Activated naive CD4-positive, alpha-beta T cell treated with anti-CD3 and anti-CD28 coated beads for 36 hours (primary cell): ENCODE measurements at regions of chr6 and their contacts with region 1.

Region 1: DNA sequence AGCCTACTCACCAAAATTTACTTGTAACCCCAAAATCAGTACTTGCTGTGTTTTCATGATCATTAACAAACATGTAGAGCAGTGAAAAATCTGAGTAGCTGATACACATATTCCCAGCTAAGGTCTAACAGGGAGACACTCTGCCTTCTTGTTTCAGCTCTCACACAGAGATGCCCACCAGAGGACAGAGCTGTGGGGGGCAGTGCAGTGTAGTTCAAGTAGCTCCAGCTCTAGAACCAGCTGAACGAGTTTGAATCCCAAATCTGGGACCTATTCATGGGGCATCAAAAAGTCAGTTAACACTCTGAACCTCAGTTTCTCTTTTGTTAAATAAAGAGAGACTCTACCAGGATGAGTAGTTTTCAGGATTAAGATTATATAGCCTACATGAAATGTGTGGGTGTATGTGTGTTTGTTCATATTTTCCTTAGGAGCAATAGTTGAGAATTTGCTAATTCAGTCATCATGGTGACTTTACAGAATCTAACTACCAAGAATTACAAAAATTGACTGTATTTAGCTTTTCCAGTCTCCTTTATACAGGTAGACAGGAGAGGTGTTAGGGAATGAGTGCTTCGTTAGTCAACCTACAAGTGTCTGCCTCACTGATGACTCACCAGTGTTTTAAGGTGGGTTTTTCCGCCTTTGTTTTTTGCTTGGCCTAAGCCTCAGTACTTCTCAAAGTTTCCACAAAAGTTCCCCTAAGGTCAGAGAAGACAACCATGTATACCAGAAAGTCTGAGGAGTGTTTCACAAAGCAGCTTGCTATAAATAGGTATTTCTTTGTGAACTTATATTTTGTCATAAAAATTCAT is 164.0 kb upstream of the RUNX2 start:
- DNase-seq: peak; percentile 72
- H3K4me3 Mint-ChIP-seq: peak overlapping the region; percentile 17
- H3K27ac Mint-ChIP-seq: peak overlapping the region; percentile 93
- H3K4me1 Mint-ChIP-seq: peaks cover 63% of the 10 kb centered on the region
- H3K27me3 Mint-ChIP-seq: no peaks in the 10 kb centered on the region

Region 2: DNA sequence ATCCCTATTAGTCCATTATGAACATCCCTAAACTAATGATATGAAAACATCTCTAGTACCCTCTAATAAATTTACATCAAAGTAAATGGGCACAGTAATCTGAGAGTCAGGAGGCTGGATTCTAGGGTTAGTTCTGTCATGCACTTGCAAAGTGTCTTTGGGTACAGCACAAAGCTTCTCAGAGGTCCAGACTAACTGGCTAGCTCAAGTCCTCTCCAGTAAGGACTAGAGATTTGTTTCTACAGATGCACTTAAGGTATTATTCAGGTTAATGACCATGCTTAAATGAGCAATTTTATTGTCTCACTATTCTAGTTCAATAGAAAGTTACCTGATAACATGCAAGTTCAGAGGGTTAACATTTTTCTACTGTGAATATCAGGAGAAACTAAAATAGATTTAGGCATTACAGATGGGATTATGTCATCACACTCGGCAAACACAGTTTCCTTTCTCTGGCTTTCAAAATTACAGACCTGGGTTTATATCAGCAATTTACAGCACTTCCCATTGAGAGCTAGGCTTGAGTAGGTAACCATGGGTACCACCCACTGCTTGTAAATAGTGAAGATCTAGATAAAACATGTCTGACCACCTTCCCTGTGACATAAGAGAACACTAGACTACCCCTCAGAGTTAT is 238.9 kb before region 1 on chr6:
- CTCF ChIA-PET with region 1: no interaction called
- intact Hi-C with region 1: loop called (anchors 1 kb)
- DNase-seq: peak; percentile 36
- H3K4me3 Mint-ChIP-seq: peak overlapping the region; percentile 0
- H3K27ac Mint-ChIP-seq: peak overlapping the region; percentile 16
- H3K4me1 Mint-ChIP-seq: peaks cover 53% of the 10 kb centered on the region
- H3K27me3 Mint-ChIP-seq: no peaks in the 10 kb centered on the region

Region 3: DNA sequence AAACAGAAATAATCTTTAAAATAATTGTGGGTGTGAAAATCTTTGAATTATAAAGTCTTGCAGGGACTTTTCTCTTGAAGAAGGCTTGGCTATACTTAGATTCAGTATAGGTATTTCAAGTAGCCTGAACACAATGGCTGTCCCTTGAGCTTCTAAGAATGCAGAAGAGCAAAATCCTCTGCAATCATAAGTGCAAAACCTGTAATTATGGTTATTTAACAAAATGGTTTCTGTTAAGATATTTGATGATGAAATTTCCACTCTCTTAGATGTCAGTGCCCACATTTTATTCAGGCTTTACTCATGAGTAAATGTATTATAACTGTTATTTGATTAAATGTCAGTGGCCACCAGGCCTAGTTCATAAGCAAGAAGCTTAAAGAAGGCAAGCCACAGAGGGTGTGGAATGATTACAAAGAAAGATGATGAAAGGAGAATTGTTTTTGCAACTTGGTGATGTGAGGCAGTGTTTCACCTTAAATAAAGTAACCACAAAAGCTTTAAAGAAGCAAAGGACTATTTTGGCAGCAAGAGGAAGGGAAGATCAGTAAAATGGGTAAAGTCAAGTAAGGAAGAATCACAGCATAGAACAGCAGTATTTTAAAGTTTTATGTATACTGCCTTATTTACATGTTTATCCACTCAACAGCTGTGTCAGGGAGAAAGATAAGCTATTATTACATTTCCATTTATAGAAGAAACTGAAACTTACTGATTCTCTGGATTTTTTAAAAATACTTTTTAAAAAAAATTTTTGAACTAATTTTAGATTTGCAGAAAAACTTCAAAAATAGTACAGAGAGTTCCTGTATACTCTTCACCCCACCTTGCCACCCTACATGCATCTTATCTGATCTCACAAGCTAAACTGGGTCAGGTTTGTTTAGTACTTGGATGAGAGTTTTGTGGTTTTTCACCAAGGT is 187.2 kb before region 1 on chr6:
- CTCF ChIA-PET with region 1: no interaction called
- intact Hi-C with region 1: loop called (anchors 1 kb)
- DNase-seq: peak; percentile 18
- H3K4me3 Mint-ChIP-seq: no peak overlapping the region
- H3K27ac Mint-ChIP-seq: peak overlapping the region; percentile 16
- H3K4me1 Mint-ChIP-seq: peaks cover 35% of the 10 kb centered on the region
- H3K27me3 Mint-ChIP-seq: no peaks in the 10 kb centered on the region

Region 4: DNA sequence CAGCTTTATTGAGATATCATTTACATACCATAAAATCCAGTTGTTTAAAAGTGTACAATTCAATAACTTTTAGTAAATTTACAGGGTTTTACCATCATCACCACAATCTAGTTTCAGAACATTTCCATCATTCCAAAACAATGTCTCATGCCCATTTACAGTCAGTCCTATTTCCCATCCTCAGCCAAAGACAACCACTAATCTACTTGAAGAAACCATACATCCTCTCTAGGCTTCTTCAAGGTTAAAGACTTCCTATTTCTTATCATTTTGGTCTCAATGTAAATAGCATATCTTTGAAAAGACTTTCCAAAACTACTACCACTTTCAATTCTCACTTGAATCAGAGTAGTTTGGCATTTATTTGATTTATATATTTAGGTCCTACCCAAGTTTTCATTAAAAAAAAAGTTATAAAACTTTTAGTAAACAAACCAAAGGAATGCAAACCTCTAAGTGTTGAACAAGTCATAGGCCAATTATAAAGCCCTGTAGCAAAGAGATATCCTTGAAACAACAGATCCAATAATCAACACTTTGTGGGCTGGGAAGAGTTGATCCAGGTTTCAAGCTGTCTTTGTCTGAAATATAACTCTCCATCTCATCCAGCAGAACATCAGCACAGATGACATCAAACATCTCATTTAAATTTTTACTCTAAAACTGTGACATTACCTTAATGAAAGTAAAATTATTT is 47.3 kb before region 1 on chr6:
- CTCF ChIA-PET with region 1: no interaction called
- intact Hi-C with region 1: loop called (anchors 1 kb)
- DNase-seq: no peak
- H3K4me3 Mint-ChIP-seq: no peak overlapping the region
- H3K27ac Mint-ChIP-seq: peak overlapping the region; percentile 52
- H3K4me1 Mint-ChIP-seq: peaks cover 24% of the 10 kb centered on the region
- H3K27me3 Mint-ChIP-seq: no peaks in the 10 kb centered on the region

Region 5: GRCh38 chr6:45293306-45293705 is 129.1 kb after region 1 on chr6:
- CTCF ChIA-PET with region 1: no interaction called
- intact Hi-C with region 1: no loop called
- DNase-seq: no peak
- H3K4me3 Mint-ChIP-seq: peak overlapping the region; percentile 3
- H3K27ac Mint-ChIP-seq: peak overlapping the region; percentile 26
- H3K4me1 Mint-ChIP-seq: peaks cover 30% of the 10 kb centered on the region
- H3K27me3 Mint-ChIP-seq: no peaks in the 10 kb centered on the region

Region 6: DNA sequence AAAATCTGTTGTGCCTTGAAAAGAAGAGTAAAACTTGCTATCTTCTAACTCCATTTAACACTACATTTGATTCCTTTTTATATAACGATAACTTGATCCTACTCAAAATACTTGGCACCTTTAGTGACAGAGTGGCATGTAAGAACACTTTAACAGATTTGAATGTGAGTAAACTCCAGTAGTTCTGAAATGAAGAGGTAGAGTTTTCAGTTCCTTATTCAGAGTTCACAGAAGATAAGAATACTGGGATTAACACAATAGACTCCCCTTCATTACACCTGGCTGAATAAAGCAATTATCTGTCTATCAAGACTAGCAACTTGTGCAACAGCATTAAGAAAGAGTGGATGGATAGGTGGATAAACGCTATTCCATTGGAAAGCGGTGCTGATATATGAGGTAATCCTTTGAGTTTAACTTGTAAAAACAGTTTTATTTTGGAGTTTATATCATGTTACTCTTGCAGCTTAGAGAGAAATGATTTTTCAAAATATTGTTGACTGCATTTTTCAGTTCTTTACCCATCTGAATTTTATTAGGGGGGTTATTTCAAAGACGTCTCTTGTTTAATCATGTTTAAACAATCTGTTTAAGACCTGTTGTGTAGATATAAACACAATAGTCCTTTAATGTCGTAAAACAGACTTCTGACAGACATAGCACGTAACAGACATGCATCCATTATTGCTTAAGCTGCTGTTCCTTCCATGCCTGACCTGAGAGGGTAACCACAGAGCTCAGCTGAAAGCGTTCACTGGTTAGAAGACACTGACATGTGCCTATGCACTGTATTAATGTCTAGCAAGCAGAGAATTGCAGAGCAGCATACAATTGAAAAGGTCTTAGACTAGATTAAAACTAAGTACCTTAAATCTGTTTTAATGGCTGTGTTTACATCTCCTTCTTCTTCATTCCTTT is 315.9 kb after region 1 on chr6:
- CTCF ChIA-PET with region 1: no interaction called
- intact Hi-C with region 1: loop called (anchors 1 kb)
- DNase-seq: no peak
- H3K4me3 Mint-ChIP-seq: no peak overlapping the region
- H3K27ac Mint-ChIP-seq: no peak overlapping the region
- H3K4me1 Mint-ChIP-seq: peaks cover 15% of the 10 kb centered on the region
- H3K27me3 Mint-ChIP-seq: no peaks in the 10 kb centered on the region

Region 7: GRCh38 chr6:46011241-46012085 is 847.3 kb after region 1 on chr6:
- CTCF ChIA-PET with region 1: no interaction called
- intact Hi-C with region 1: loop called (anchors 5 kb)
- DNase-seq: peak; percentile 78
- H3K4me3 Mint-ChIP-seq: no peak overlapping the region
- H3K27ac Mint-ChIP-seq: peak overlapping the region; percentile 72
- H3K4me1 Mint-ChIP-seq: peaks cover 45% of the 10 kb centered on the region
- H3K27me3 Mint-ChIP-seq: peaks cover 6% of the 10 kb centered on the region